Activated B cell treated with CpG ODN at 0.5 μM for 24 hours (primary cell): ENCODE measurements at regions of chr9 and their contacts with region 1.

Region 1: GRCh38 chr9:5355817-5356216 is 16.1 kb upstream of the RLN1 start:
- DNase-seq: no peak
- ATAC-seq: no peak
- H3K4me3 Mint-ChIP-seq: no peak overlapping the region
- H3K27ac Mint-ChIP-seq: no peak overlapping the region
- H3K4me1 Mint-ChIP-seq: peaks cover 8% of the 10 kb centered on the region
- H3K27me3 Mint-ChIP-seq: no peaks in the 10 kb centered on the region
- CTCF ChIP-seq: no peak

Region 2: GRCh38 chr9:5301544-5301943 is 54.3 kb before region 1 on chr9:
- CTCF ChIA-PET with region 1: no interaction called
- POLR2A ChIA-PET with region 1: no interaction called
- intact Hi-C with region 1: no loop called
- DNase-seq: no peak
- ATAC-seq: no peak
- H3K4me3 Mint-ChIP-seq: no peak overlapping the region
- H3K27ac Mint-ChIP-seq: no peak overlapping the region
- H3K4me1 Mint-ChIP-seq: peaks cover 11% of the 10 kb centered on the region
- H3K27me3 Mint-ChIP-seq: no peaks in the 10 kb centered on the region
- CTCF ChIP-seq: no peak

Region 3: GRCh38 chr9:5375091-5375490 is 19.3 kb after region 1 on chr9:
- CTCF ChIA-PET with region 1: no interaction called
- POLR2A ChIA-PET with region 1: no interaction called
- intact Hi-C with region 1: no loop called
- DNase-seq: no peak
- ATAC-seq: no peak
- H3K4me3 Mint-ChIP-seq: no peak overlapping the region
- H3K27ac Mint-ChIP-seq: no peak overlapping the region
- H3K4me1 Mint-ChIP-seq: no peaks in the 10 kb centered on the region
- H3K27me3 Mint-ChIP-seq: no peaks in the 10 kb centered on the region
- CTCF ChIP-seq: no peak

Region 4: DNA sequence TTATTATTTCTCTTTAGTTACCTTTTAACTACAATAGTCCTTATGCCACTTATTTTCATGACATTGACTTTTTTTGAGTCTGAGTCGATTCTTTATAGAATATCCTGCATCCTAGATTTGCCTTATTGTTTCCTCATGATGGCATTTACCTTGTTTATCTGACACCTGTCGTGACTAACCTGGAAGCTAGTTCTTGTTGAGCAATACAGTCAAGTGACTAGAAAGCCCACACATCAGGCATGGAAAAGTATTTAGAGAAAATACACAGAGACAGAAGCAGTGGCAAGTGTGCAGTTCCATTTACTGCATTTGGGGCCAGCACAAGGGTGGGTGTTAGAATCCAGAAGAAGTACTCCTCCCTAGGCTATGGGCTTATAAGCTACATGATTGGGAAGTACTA is 379.3 kb after region 1 on chr9:
- CTCF ChIA-PET with region 1: no interaction called
- POLR2A ChIA-PET with region 1: no interaction called
- intact Hi-C with region 1: loop called (anchors 1 kb)
- DNase-seq: no peak
- ATAC-seq: no peak
- H3K4me3 Mint-ChIP-seq: no peak overlapping the region
- H3K27ac Mint-ChIP-seq: no peak overlapping the region
- H3K4me1 Mint-ChIP-seq: no peaks in the 10 kb centered on the region
- H3K27me3 Mint-ChIP-seq: no peaks in the 10 kb centered on the region
- CTCF ChIP-seq: no peak